PC-3 (cell line): ENCODE measurements at regions of chr2 and their contacts with region 1.

Region 1: DNA sequence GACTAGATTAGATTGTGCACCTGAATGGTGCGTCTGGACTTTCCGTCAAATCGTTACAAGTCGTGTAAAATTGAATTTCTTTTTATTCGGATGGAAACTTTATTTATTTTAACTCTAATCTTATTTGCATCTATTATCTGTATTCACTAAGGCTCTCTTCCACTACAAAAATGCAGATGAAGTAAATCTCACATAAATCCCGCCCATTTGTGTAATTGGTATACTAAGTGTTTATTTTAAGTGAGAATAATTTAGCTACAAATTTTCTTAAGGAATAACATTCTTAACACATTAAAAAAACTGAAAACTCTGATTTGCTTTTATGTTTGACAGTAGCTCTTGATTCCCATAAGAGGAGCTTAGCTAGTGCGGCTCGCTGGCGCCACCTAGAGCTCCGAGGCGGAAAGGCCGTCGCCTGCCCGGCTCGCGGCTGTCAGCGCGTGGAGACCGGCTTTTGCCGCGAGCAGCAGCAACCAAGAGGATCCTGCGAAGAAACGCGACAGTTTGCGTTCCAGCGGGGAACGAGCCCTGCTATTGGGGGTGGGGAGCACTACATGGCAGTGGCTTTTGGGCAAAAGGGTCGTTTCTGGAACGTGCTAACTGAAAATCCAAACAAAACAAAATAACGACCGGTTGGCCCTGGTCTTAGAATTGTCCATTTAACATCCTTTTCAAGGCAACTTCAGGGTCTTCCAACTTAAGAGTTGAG is 6.7 kb downstream of the SP9 start:
- DNase-seq: peak; percentile 93
- ATAC-seq: peak; percentile 68
- H3K4me3 ChIP-seq: peak overlapping the region; percentile 62
- H3K27ac ChIP-seq: peak overlapping the region; percentile 21
- H3K4me1 ChIP-seq: peaks cover 23% of the 10 kb centered on the region
- H3K27me3 ChIP-seq: no peaks in the 10 kb centered on the region
- CTCF ChIP-seq: peak; percentile 98

Region 2: GRCh38 chr2:173884025-173884802 is 457.2 kb before region 1 on chr2:
- CTCF ChIA-PET with region 1: interaction called, 7 read pairs
- POLR2A ChIA-PET with region 1: no interaction called
- intact Hi-C with region 1: loop called (anchors 2 kb)
- DNase-seq: peak; percentile 78
- ATAC-seq: peak; percentile 91
- H3K4me3 ChIP-seq: no peak overlapping the region
- H3K27ac ChIP-seq: no peak overlapping the region
- H3K4me1 ChIP-seq: peaks cover 6% of the 10 kb centered on the region; the same call in 1 of the 2 replicates
- H3K27me3 ChIP-seq: no peaks in the 10 kb centered on the region
- CTCF ChIP-seq: peak; percentile 83

Region 3: GRCh38 chr2:174078275-174078674 is 263.2 kb before region 1 on chr2:
- CTCF ChIA-PET with region 1: interaction called, 3 read pairs
- POLR2A ChIA-PET with region 1: no interaction called
- intact Hi-C with region 1: loop called (anchors 2 kb)
- DNase-seq: peak; percentile 31
- ATAC-seq: no peak
- H3K4me3 ChIP-seq: no peak overlapping the region
- H3K27ac ChIP-seq: no peak overlapping the region
- H3K4me1 ChIP-seq: no peaks in the 10 kb centered on the region
- H3K27me3 ChIP-seq: no peaks in the 10 kb centered on the region
- CTCF ChIP-seq: peak; percentile 75

Region 4: DNA sequence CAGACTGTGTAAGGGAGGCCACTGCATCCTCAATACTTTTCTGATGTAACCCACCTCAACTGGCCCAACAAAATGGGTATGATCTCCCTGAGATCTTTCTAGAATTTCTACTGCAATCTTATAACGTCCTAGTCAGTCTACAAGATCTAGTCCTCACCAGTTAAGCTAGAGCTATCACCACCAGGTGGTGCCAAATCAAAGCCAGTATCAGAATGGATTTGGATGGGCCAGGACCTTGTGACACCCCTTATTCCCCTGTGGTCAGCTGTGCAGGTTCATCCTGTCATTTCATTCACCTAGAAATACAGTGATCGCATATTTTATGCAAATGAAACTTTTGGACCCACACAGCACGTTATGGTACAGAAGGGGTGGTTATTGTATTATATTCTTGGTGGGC is 183.4 kb before region 1 on chr2:
- CTCF ChIA-PET with region 1: interaction called, 9 read pairs
- POLR2A ChIA-PET with region 1: no interaction called
- intact Hi-C with region 1: loop called (anchors 1 kb)
- DNase-seq: peak; percentile 70
- ATAC-seq: peak; percentile 88
- H3K4me3 ChIP-seq: no peak overlapping the region
- H3K27ac ChIP-seq: no peak overlapping the region
- H3K4me1 ChIP-seq: no peaks in the 10 kb centered on the region
- H3K27me3 ChIP-seq: no peaks in the 10 kb centered on the region
- CTCF ChIP-seq: peak; percentile 87